H1 (cell line): ENCODE measurements at regions of chr3 and their contacts with region 1.

Region 1: DNA sequence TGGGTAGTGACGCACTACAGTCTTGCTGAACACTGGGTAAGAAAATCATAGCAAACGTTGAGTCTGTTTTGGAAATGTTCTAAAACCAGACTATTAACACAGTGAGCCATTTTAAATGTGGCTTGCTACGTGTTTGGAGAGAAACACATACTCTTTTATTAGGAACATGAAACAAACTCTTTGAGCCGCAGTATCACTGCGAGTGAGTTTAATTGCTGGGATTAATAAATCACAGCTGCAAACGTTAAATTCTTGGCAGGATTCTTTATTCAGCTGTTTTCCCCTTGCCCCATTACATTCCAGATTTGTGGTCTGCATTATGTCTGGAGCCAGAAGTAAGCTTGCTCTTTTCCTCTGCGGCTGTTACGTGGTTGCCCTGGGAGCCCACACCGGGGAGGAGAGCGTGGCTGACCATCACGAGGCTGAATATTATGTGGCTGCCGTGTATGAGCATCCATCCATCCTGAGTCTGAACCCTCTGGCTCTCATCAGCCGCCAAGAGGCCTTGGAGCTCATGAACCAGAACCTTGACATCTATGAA is 33.6 kb downstream of the BTD start:
- DNase-seq: no peak
- H3K4me3 ChIP-seq: no peak overlapping the region
- H3K27ac ChIP-seq: no peak overlapping the region
- H3K4me1 ChIP-seq: peaks cover 15 to 47% (median 28%) of the 10 kb centered on the region in 4 experiments
- H3K27me3 ChIP-seq: no peaks in the 10 kb centered on the region
- CTCF ChIP-seq: no peak
- EP300 ChIP-seq: no peak
- POLR2A ChIP-seq: no peak
- RAD21 ChIP-seq: no peak

Region 2: DNA sequence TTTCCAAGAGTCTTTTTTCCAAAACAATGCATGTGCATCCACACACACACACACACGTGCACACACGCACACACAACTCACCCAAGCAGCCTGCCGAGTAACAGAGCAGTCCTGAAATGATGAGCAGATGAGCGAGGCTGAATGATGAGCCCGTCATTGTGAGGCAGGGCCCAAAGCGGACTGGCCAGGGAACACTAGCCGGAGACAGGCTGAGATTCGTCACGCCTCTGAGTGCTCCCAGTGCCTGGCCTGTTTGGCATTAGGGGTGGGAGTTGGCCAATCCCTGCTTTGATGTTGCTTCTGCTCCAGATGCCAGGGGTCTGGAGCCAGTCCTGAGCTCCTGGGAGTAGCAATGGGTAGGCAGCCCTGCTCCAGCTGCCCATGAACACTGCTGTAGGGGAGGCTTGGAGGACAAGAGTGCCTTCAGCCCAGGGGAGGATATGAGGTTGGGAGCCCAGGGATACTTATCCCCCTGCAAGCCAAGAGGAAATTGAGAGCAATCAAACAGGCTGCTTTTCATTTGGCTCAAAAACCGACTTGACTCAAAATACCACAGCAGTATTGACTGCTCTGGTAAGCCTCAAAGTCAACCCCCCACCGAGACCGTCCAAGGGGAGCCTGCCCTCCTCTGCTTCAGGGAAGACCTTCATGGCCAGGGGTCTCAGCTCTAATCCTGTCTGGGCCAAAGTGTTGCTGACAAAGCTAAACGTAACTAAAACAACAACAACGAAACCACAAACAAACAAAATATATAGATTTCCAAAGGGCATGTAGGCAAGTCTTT is 136.6 kb before region 1 on chr3:
- CTCF ChIA-PET with region 1: no interaction called
- POLR2A ChIA-PET with region 1: no interaction called
- DNase-seq: no peak
- H3K4me3 ChIP-seq: no peak overlapping the region
- H3K27ac ChIP-seq: no peak overlapping the region
- H3K4me1 ChIP-seq: peaks cover 5 to 10% (median 6%) of the 10 kb centered on the region in 4 experiments
- H3K27me3 ChIP-seq: no peaks in the 10 kb centered on the region; a peak in 1 of 7 replicates
- CTCF ChIP-seq: no peak
- EP300 ChIP-seq: no peak
- POLR2A ChIP-seq: no peak
- RAD21 ChIP-seq: no peak

Region 3: GRCh38 chr3:15542614-15543013 is 92.6 kb before region 1 on chr3:
- CTCF ChIA-PET with region 1: no interaction called
- POLR2A ChIA-PET with region 1: no interaction called
- DNase-seq: no peak
- H3K4me3 ChIP-seq: no peak overlapping the region
- H3K27ac ChIP-seq: no peak overlapping the region
- H3K4me1 ChIP-seq: no peaks in the 10 kb centered on the region
- H3K27me3 ChIP-seq: no peaks in the 10 kb centered on the region
- CTCF ChIP-seq: no peak
- EP300 ChIP-seq: no peak
- POLR2A ChIP-seq: no peak
- RAD21 ChIP-seq: no peak

Region 4: DNA sequence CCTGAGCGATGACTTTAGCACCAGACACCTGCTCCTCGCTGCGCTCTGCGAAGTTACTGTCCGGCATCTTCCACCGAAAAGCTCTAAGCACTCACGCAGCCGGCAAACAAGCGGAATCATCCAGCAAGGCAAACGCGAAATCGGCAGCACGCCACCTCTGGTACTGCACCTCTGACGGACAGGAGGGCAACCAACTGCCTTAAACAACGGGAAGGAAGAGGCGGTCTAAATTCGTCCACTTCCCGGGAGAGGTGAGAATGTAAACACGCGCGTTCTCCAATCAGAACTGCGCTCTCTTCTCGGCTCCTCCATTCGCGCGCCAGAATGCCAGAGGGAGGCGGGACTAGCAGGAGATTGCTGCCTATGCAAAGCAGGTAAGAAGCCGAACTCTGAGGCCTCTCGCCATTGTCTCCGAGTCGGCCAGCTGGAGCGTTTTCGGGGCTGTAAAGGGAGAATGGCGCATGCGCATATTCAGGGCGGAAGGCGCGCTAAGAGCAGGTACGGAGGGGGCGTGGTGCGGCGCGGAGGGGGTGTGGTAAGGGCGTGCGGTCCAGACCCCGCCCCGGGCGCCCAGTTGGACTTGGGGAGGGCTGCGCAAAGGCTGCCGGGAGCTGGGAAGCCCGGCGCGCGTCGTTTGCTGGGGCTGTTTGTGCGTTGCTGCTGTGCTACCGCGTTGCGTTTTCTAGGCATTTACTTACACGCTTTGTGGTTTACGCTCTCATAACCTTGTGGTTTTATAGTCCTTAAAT is 33.6 kb before region 1 on chr3 and contains the starts of genes BTD and HACL1:
- CTCF ChIA-PET with region 1: no interaction called
- POLR2A ChIA-PET with region 1: interaction called, 12 read pairs
- DNase-seq: peak; percentile 97 to 99
- H3K4me3 ChIP-seq: peak within 1 kb of the TSS; percentile 84 to 99 (median 89)
- H3K27ac ChIP-seq: peak within 1 kb of the TSS; percentile 90
- H3K4me1 ChIP-seq: peaks cover 0 to 6% (median 0%) of the 10 kb centered on the region in 4 experiments; a peak in 2 of 7 replicates
- H3K27me3 ChIP-seq: no peaks in the 10 kb centered on the region
- CTCF ChIP-seq: peak; percentile 3 to 45 (median 34); a peak in 3 of 4 replicates
- EP300 ChIP-seq: no peak
- POLR2A ChIP-seq: peak; percentile 88 to 97
- RAD21 ChIP-seq: no peak
- total RNA-seq, gene BTD: 21.8 and 22.0 TPM in 2 replicates
- total RNA-seq, gene HACL1: 45.7 and 46.0 TPM in 2 replicates